MCF 10A (cell line): ENCODE measurements at regions of chr18 and their contacts with region 1.

Region 1: DNA sequence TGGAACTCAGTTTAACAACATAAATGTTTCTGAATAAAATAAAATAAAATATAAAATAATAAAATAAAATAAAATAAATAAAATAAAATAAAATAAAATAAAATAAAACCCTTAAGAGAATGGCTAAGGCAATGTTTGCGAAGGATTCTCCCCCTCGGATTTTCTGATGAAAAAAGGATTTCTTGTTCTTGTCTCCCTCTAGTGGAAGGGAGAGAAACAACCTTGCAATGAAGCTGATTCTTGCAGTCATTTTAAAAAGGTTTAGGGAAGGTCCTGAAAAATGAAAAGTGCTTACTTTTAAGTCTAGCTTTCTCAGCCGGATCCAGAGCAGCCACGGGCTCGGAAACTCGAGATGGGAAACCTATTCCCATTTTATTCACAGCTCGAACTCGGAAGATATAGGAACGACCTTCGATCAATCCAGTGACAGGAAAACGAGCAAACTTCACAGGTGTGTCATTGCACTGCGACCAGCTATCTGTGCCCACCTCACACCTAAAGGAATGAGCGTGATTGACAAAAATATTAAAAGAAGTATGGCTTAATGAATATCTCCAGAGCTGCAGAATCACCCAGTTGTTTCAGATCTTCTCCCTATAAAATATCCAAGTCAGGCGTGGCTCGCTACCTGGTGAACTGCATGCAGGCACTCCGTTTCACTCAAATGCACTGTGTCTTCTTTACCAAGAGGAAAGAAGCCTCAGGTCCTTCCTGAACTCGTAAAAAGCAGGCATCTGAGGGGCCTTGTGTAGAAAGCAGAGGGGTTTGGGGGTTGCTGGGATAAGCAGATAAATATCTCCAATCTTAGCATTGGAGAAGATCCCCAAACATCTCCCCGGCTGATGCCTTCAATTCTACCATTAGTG is 68.1 kb downstream of the MYOM1 start:
- DNase-seq: peak; percentile 50
- H3K4me3 Mint-ChIP-seq: no peak overlapping the region
- H3K27ac Mint-ChIP-seq: peak overlapping the region; percentile 77
- H3K4me1 Mint-ChIP-seq: peaks cover 54% of the 10 kb centered on the region
- H3K27me3 Mint-ChIP-seq: no peaks in the 10 kb centered on the region
- CTCF ChIP-seq: peak; percentile 71

Region 2: GRCh38 chr18:2948038-2948437 is 203.6 kb before region 1 on chr18:
- CTCF ChIA-PET with region 1: interaction called, 33 read pairs
- POLR2A ChIA-PET with region 1: interaction called, 7 read pairs
- intact Hi-C with region 1: loop called (anchors 5 kb)
- DNase-seq: peak; percentile 48
- H3K4me3 Mint-ChIP-seq: no peak overlapping the region
- H3K27ac Mint-ChIP-seq: no peak overlapping the region
- H3K4me1 Mint-ChIP-seq: no peaks in the 10 kb centered on the region
- H3K27me3 Mint-ChIP-seq: no peaks in the 10 kb centered on the region
- CTCF ChIP-seq: peak; percentile 35

Region 3: GRCh38 chr18:3117493-3118192 is 34.0 kb before region 1 on chr18:
- CTCF ChIA-PET with region 1: interaction called, 21 read pairs
- POLR2A ChIA-PET with region 1: interaction called, 5 read pairs
- intact Hi-C with region 1: no loop called
- DNase-seq: peak; percentile 92
- H3K4me3 Mint-ChIP-seq: no peak overlapping the region
- H3K27ac Mint-ChIP-seq: peak overlapping the region; percentile 83
- H3K4me1 Mint-ChIP-seq: peaks cover 28% of the 10 kb centered on the region
- H3K27me3 Mint-ChIP-seq: no peaks in the 10 kb centered on the region
- CTCF ChIP-seq: no peak

Region 4: GRCh38 chr18:3162181-3162580 is 10.5 kb after region 1 on chr18:
- CTCF ChIA-PET with region 1: interaction called, 20 read pairs
- POLR2A ChIA-PET with region 1: interaction called, 4 read pairs
- intact Hi-C with region 1: no loop called
- DNase-seq: peak; percentile 58
- H3K4me3 Mint-ChIP-seq: no peak overlapping the region
- H3K27ac Mint-ChIP-seq: peak overlapping the region; percentile 44
- H3K4me1 Mint-ChIP-seq: peaks cover 5% of the 10 kb centered on the region
- H3K27me3 Mint-ChIP-seq: no peaks in the 10 kb centered on the region
- CTCF ChIP-seq: no peak

Region 5: GRCh38 chr18:3379685-3380084 is 228.1 kb after region 1 on chr18:
- CTCF ChIA-PET with region 1: no interaction called
- POLR2A ChIA-PET with region 1: no interaction called
- intact Hi-C with region 1: no loop called
- DNase-seq: no peak
- H3K4me3 Mint-ChIP-seq: no peak overlapping the region
- H3K27ac Mint-ChIP-seq: no peak overlapping the region
- H3K4me1 Mint-ChIP-seq: no peaks in the 10 kb centered on the region
- H3K27me3 Mint-ChIP-seq: no peaks in the 10 kb centered on the region
- CTCF ChIP-seq: no peak